ENCODE measurements at regions of chr19 and their contacts with region 1.

Region 1: GRCh38 chr19:9342610-9343304 is 18.8 kb downstream of the ZNF559 start:
- DNase-seq: no peak
- ATAC-seq: no peak
- H3K4me3 ChIP-seq: no peak overlapping the region
- H3K27ac ChIP-seq: no peak overlapping the region
- H3K4me1 ChIP-seq: no peaks in the 10 kb centered on the region
- H3K27me3 ChIP-seq: no peaks in the 10 kb centered on the region
- CTCF ChIP-seq: no peak

Region 2: DNA sequence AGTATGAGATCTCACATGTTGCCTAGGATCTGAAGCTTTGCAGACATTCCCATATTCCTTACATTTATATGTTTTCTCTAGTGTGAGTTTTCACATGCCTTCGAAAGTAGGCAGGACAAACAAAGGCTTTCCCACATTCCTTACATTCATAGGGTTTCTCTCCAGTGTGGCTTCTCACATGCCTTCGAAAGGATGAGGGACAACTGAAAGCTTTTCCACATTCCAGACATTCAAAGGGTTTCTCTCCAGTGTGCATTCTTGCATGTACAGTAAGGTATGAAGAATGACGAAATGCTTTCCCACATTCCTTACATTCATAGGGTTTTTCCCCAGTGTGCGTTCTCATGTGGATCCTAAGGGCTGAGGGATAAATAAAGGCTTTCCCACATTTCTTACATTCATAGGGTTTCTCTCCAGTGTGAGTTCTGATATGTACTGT is 47.3 kb before region 1 on chr19:
- intact Hi-C with region 1: loop called (anchors 10 kb)
- DNase-seq: no peak
- ATAC-seq: no peak
- H3K4me3 ChIP-seq: no peak overlapping the region
- H3K27ac ChIP-seq: no peak overlapping the region
- H3K4me1 ChIP-seq: no peaks in the 10 kb centered on the region
- H3K27me3 ChIP-seq: no peaks in the 10 kb centered on the region
- CTCF ChIP-seq: no peak

Region 3: GRCh38 chr19:9406798-9407352 is 64.1 kb after region 1 on chr19:
- intact Hi-C with region 1: no loop called
- DNase-seq: peak; percentile 65
- ATAC-seq: peak; percentile 70 to 83
- H3K4me3 ChIP-seq: peak overlapping the region; percentile 58
- H3K27ac ChIP-seq: no peak overlapping the region
- H3K4me1 ChIP-seq: no peaks in the 10 kb centered on the region
- H3K27me3 ChIP-seq: no peaks in the 10 kb centered on the region
- CTCF ChIP-seq: no peak

Region 4: DNA sequence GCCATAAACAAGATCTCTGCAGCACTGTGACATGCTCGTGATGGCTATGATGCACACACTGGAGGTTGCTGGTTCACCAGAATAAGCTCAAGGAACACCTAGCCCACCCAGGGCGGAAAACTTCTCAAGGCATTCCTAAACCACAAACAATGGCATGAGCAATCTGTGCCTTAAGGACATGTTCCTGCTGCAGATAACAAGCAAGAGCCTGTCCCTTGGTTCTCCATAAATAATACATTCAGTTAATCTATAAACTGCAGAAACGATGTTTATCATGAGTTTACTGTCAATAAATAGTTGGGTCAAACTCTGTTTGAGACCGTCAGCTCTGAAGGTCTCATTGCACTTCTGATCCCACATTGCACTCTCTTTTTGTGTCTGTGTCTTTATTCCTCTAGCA is 111.2 kb after region 1 on chr19:
- intact Hi-C with region 1: no loop called
- DNase-seq: no peak
- ATAC-seq: no peak
- H3K4me3 ChIP-seq: no peak overlapping the region
- H3K27ac ChIP-seq: no peak overlapping the region
- H3K4me1 ChIP-seq: no peaks in the 10 kb centered on the region
- H3K27me3 ChIP-seq: no peaks in the 10 kb centered on the region
- CTCF ChIP-seq: no peak

Measured in lower lobe of right lung (tissue), 2 donors.